ENCODE measurements at regions of chr11 and their contacts with region 1.

Region 1: GRCh38 chr11:73295231-73295995 is 12.7 kb upstream of the ARHGEF17 start:
- DNase-seq: peak in 2 of 3 donors; percentile 82
- ATAC-seq: peak; percentile 81
- H3K4me3 ChIP-seq: no peak overlapping the region
- H3K4me1 ChIP-seq: no peaks in the 10 kb centered on the region
- CTCF ChIP-seq: peak; percentile 72

Region 2: GRCh38 chr11:72899238-72899637 is 396.2 kb before region 1 on chr11:
- intact Hi-C with region 1: no loop called
- DNase-seq: no peak
- ATAC-seq: no peak
- H3K4me3 ChIP-seq: no peak overlapping the region
- H3K4me1 ChIP-seq: no peaks in the 10 kb centered on the region
- CTCF ChIP-seq: no peak

Region 3: DNA sequence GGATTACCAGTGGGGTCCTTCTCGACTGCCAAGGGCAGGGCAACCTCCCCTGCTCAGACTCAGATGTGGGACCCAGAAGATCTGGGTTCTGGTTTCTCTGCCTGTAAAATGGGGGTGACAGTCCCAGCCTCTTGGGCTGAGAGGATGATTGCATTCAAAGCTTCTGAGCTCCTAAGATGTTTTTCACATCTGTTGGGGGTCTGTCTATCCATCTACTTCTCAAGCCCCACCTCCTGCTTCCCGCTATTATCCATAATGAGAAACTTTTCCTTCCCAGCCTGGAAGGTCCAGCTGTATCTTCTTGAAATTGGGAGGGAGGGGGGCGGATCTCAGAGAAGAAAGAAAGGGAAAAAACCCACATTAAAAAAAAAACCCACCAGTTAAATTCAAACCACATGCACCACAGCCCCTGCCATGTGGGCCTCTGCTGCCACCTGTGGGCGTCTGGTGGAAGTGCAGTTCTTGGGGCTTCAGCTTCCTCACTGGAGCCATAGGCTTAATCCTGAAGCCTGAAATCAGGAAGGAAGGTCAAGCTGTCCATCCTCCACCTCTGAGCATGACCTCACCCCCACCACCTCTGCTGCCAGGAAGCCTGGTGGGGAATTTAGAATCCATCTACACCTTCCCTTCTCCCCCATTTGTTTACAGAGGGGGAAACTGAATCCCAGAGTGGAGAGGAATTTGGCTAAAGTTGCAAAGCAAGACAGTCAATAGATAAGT is 40.0 kb after region 1 on chr11:
- intact Hi-C with region 1: loop called (anchors 5 kb)
- DNase-seq: peak; percentile 74 to 92 (median 87)
- ATAC-seq: peak; percentile 90
- H3K4me3 ChIP-seq: no peak overlapping the region
- H3K4me1 ChIP-seq: peaks cover 4% of the 10 kb centered on the region
- CTCF ChIP-seq: peak; percentile 97

Region 4: GRCh38 chr11:73463359-73463758 is 167.9 kb after region 1 on chr11:
- intact Hi-C with region 1: no loop called
- DNase-seq: no peak
- ATAC-seq: no peak
- H3K4me3 ChIP-seq: no peak overlapping the region
- H3K4me1 ChIP-seq: no peaks in the 10 kb centered on the region
- CTCF ChIP-seq: no peak